ENCODE measurements at regions of chr20 and their contacts with region 1.

Region 1: GRCh38 chr20:4167261-4168021 is 152.1 kb upstream of the RNF24 start:
- DNase-seq: no peak
- H3K4me3 Mint-ChIP-seq: no peak overlapping the region
- H3K27ac Mint-ChIP-seq: no peak overlapping the region
- H3K4me1 Mint-ChIP-seq: peaks cover 28% of the 10 kb centered on the region
- H3K27me3 Mint-ChIP-seq: peaks cover 19% of the 10 kb centered on the region

Region 2: GRCh38 chr20:4112481-4113421 is 54.7 kb before region 1 on chr20:
- CTCF ChIA-PET with region 1: interaction called, 16 read pairs
- DNase-seq: no peak
- H3K4me3 Mint-ChIP-seq: no peak overlapping the region
- H3K27ac Mint-ChIP-seq: no peak overlapping the region
- H3K4me1 Mint-ChIP-seq: peaks cover 30% of the 10 kb centered on the region
- H3K27me3 Mint-ChIP-seq: peaks cover 39% of the 10 kb centered on the region

Region 3: DNA sequence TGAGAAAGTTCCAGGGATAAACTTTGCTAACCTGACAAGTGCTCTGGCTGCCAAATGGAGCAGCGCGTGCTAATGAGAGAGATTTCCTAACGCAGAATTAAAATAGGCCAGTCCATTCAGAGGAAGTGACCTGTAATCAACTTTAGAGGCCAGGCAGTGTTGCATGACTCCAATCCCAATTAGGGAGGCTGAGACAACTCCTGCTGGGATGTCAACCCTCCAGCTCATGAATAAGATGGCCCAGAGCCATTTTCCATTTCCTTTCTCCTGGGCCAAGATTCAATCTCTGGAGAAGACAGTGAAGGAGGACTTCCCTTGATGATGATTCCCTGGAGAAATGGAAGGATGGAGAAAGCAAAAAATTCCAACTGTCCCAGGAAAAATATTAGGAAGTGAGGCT is 89.4 kb after region 1 on chr20:
- CTCF ChIA-PET with region 1: no interaction called
- DNase-seq: no peak
- H3K4me3 Mint-ChIP-seq: no peak overlapping the region
- H3K27ac Mint-ChIP-seq: no peak overlapping the region
- H3K4me1 Mint-ChIP-seq: no peaks in the 10 kb centered on the region
- H3K27me3 Mint-ChIP-seq: peaks cover 37% of the 10 kb centered on the region

Region 4: GRCh38 chr20:4283016-4283415 is 115.6 kb after region 1 on chr20:
- CTCF ChIA-PET with region 1: no interaction called
- DNase-seq: no peak
- H3K4me3 Mint-ChIP-seq: no peak overlapping the region
- H3K27ac Mint-ChIP-seq: no peak overlapping the region
- H3K4me1 Mint-ChIP-seq: no peaks in the 10 kb centered on the region
- H3K27me3 Mint-ChIP-seq: peaks cover 4% of the 10 kb centered on the region